ENCODE measurements at regions of chr15 and their contacts with region 1.

Region 1: GRCh38 chr15:75354454-75354853 is 7.6 kb downstream of the NEIL1 start:
- DNase-seq: no peak
- H3K4me3 ChIP-seq: no peak overlapping the region
- H3K27ac ChIP-seq: no peak overlapping the region
- H3K4me1 ChIP-seq: no peaks in the 10 kb centered on the region
- H3K27me3 ChIP-seq: no peaks in the 10 kb centered on the region
- CTCF ChIP-seq: no peak
- POLR2A ChIP-seq: no peak

Region 2: DNA sequence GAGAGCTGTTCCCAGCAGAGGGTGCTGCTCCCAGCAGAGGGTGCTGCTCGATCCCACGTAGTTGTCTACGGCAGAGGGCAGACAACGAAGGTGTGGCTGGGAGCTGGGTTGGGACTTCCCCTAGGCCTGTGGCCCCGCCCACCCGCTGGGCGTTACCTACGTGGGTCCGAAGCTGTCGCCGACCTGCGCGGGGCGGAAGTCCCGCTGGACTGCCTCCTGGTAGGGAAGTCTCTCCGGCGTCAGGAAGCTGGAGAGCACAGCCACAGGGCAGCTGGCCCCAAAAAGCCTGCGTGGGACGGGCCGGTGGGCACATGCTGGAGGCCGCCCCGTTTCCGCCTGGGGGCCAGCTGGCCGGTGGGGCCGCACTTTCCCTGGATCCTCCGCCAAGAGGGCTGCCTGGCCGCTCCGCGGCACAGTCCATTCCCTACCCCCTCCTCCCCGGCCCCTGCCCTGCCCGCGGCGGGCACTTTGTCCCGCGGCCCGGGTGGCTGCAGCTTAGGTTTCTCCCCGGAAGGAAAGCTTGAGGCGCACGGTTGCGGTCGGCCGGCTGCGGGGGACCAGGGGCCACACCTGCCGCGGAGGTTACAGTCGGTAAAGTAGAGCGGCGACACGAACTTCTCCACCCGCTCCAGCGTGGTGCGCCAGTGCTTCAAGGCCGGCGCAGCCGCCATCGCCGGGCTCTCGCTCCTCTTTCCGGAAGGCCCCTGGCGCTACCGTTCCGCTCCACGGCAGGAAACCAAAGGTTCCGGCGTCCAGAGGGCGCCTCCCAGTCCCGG is 13.6 kb after region 1 on chr15 and contains the start of gene MAN2C1:
- CTCF ChIA-PET with region 1: interaction called, 12 read pairs
- POLR2A ChIA-PET with region 1: no interaction called
- dilution Hi-C with region 1: no loop called
- intact Hi-C with region 1: no loop called
- DNase-seq: peak; percentile 93
- H3K4me3 ChIP-seq: peak within 1 kb of the TSS; percentile 50 to 83 (median 51)
- H3K27ac ChIP-seq: peak within 1 kb of the TSS; percentile 79
- H3K4me1 ChIP-seq: peaks cover 15% of the 10 kb centered on the region
- H3K27me3 ChIP-seq: no peaks in the 10 kb centered on the region
- CTCF ChIP-seq: peak; percentile 63 to 76
- POLR2A ChIP-seq: peak; percentile 93
- total RNA-seq, gene MAN2C1: 248 TPM in 2 replicates